ENCODE measurements at regions of chr3 and their contacts with region 1.

Region 1: GRCh38 chr3:101518421-101518871 is 5.4 kb upstream of the SENP7 start:
- DNase-seq: peak; percentile 69
- H3K4me3 Mint-ChIP-seq: peak overlapping the region; percentile 65
- H3K27ac Mint-ChIP-seq: peak overlapping the region; percentile 93
- H3K4me1 Mint-ChIP-seq: peaks cover 48% of the 10 kb centered on the region
- H3K27me3 Mint-ChIP-seq: no peaks in the 10 kb centered on the region

Region 2: DNA sequence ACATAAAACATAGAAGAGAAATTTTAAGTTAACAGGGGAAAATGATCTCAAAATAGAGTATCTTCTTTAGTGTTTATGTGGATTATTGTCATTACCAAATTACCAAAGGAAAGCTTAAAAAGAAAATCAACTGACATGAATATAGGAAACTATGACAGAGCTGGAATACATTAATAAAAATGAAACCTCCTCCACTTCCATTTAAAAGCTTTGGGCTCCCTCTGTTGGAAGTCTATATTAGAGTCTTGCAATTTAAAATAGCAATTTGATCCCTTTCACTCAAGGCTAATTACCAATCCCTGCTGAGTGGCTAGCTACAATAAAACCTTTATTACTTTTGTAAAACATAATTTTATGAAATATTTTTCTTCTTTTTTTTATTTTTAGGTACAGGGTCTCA is 136.6 kb before region 1 on chr3:
- CTCF ChIA-PET with region 1: interaction called, 3 read pairs
- POLR2A ChIA-PET with region 1: no interaction called
- intact Hi-C with region 1: loop called (anchors 1 kb)
- DNase-seq: no peak
- H3K4me3 Mint-ChIP-seq: no peak overlapping the region
- H3K27ac Mint-ChIP-seq: no peak overlapping the region
- H3K4me1 Mint-ChIP-seq: peaks cover 50% of the 10 kb centered on the region
- H3K27me3 Mint-ChIP-seq: no peaks in the 10 kb centered on the region

Region 3: GRCh38 chr3:101544161-101544850 is 25.9 kb after region 1 on chr3:
- CTCF ChIA-PET with region 1: interaction called, 5 read pairs
- POLR2A ChIA-PET with region 1: interaction called, 10 read pairs
- intact Hi-C with region 1: loop called (anchors 1 kb)
- DNase-seq: no peak
- H3K4me3 Mint-ChIP-seq: no peak overlapping the region
- H3K27ac Mint-ChIP-seq: peak overlapping the region; percentile 56
- H3K4me1 Mint-ChIP-seq: peaks cover 33% of the 10 kb centered on the region
- H3K27me3 Mint-ChIP-seq: no peaks in the 10 kb centered on the region

Region 4: DNA sequence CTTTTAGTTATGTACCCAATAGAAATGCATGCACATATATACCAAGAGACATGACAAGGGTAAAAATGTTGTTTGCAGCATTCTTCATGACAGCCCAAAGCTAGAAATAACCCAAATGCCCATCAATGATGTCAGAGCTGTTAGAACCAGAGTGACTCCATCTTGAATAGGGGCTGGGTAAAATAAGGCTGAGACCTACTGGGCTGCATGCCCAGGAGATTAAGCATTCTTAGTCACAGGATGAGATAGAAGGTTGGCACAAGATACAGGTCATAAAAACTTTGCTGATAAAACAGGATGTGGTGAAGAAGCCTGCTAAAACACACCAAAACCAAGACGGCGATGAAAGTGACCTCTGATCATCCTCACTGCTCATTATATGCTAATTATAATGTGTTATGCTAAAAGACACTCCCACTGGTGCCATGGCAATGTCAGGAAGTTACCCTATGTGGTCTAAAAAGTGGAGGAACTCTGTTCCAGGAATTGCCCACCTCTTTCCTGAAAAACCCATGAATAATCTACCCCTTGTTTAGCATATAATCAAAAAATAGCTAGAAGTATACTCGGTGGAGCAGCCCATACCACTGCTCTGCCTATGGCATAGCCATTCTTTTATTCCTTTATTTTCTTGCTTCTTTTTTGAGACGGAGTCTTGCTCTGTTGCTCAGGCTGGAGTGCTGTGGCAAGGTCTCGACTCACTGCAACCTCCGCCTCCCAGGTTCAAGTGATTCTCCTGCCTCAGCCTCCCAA is 125.6 kb after region 1 on chr3:
- CTCF ChIA-PET with region 1: no interaction called
- POLR2A ChIA-PET with region 1: interaction called, 4 read pairs
- intact Hi-C with region 1: loop called (anchors 1 kb)
- DNase-seq: peak; percentile 69
- H3K4me3 Mint-ChIP-seq: no peak overlapping the region
- H3K27ac Mint-ChIP-seq: peak overlapping the region; percentile 87
- H3K4me1 Mint-ChIP-seq: peaks cover 32% of the 10 kb centered on the region
- H3K27me3 Mint-ChIP-seq: no peaks in the 10 kb centered on the region

Region 5: DNA sequence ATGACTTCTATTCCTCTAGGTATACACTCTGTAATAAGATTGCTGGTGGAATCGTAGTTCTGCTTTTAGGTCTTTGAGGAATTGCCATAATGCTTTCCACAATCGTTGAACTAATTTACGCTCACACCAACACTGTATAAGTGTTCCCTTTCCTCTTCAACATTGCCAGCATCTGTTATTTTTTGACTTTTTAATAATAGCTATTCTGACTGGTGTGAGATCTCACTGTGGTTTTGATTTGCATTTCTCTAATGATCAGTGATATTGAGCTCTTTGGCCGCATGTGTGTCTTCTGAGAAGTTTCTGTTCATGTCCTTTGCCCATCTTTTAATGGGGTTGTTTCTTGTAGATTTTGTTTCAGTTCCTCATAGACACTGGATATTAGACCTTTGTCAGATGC is 273.3 kb after region 1 on chr3:
- CTCF ChIA-PET with region 1: no interaction called
- POLR2A ChIA-PET with region 1: no interaction called
- intact Hi-C with region 1: no loop called
- DNase-seq: no peak
- H3K4me3 Mint-ChIP-seq: no peak overlapping the region
- H3K27ac Mint-ChIP-seq: no peak overlapping the region
- H3K4me1 Mint-ChIP-seq: peaks cover 50% of the 10 kb centered on the region
- H3K27me3 Mint-ChIP-seq: no peaks in the 10 kb centered on the region

Region 6: DNA sequence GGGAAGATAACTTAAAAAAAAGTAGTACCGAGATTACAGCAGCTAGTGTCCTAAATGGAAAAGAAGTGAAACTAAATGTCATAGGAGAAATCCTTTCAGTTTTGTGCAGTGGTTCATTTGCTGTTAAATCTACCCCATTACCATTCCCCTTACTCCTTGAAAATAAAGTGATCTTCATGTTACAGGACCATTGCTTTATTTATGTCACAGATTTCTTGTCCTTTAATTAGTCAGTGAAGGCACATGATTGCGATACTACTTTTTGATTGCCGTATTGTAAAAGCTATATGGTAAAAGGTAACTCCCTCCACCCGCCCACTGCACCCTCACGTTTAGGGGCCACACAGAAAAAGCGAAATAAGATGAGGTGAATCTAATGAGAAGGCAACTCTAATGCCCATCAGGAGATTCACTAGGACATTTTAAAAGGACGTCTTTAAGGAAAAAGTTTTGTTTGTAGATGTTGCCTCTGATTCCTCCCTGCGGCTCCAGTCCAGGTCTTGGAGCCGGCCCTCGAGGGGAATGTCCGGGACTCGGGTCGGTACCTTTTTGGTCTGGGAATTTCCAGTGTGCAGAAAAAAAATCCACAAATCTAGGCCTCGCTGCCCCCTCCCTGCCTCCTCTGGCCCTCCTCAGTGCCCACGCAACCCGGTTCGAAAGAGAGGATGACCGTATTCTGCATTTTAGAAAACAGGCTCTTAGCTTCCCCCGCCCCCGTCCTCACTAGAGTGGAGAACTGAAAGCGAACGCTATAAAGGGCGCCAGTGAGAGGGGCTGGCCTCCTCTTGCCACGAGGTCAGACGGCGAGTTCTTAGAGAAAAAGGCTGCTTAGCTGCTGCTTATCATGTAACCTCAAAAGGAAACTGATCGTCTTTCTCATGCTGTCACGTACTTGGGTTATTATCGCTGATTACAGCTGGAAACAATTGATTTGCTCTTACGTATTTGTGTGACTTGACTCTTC is 309.0 kb after region 1 on chr3:
- CTCF ChIA-PET with region 1: no interaction called
- POLR2A ChIA-PET with region 1: no interaction called
- intact Hi-C with region 1: loop called (anchors 5 kb)
- DNase-seq: peak; percentile 95
- H3K4me3 Mint-ChIP-seq: peak overlapping the region; percentile 85
- H3K27ac Mint-ChIP-seq: peak overlapping the region; percentile 96
- H3K4me1 Mint-ChIP-seq: peaks cover 63% of the 10 kb centered on the region
- H3K27me3 Mint-ChIP-seq: no peaks in the 10 kb centered on the region

Measured in activated CD4-positive, alpha-beta memory T cell treated with anti-CD3 and anti-CD28 coated beads for 36 hours (primary cell).